ENCODE measurements at regions of chr9 and their contacts with region 1.

Region 1: GRCh38 chr9:2837915-2838314 is 6.0 kb downstream of the PUM3 start:
- DNase-seq: no peak
- ATAC-seq: peak in 3 of 4 donors; percentile 33 to 58 (median 55)
- H3K4me3 ChIP-seq: peak overlapping the region in 9 of 12 donors; percentile 7 to 52 (median 34)
- H3K27ac ChIP-seq: peak overlapping the region in 9 of 12 donors; percentile 0 to 73 (median 37)
- H3K4me1 ChIP-seq: peaks cover 3 to 56% (median 42%) of the 10 kb centered on the region in 12 donors
- H3K27me3 ChIP-seq: no peaks in the 10 kb centered on the region
- CTCF ChIP-seq: peak in 11 of 12 donors; percentile 22 to 64 (median 44)
- POLR2A ChIP-seq: no peak

Region 2: DNA sequence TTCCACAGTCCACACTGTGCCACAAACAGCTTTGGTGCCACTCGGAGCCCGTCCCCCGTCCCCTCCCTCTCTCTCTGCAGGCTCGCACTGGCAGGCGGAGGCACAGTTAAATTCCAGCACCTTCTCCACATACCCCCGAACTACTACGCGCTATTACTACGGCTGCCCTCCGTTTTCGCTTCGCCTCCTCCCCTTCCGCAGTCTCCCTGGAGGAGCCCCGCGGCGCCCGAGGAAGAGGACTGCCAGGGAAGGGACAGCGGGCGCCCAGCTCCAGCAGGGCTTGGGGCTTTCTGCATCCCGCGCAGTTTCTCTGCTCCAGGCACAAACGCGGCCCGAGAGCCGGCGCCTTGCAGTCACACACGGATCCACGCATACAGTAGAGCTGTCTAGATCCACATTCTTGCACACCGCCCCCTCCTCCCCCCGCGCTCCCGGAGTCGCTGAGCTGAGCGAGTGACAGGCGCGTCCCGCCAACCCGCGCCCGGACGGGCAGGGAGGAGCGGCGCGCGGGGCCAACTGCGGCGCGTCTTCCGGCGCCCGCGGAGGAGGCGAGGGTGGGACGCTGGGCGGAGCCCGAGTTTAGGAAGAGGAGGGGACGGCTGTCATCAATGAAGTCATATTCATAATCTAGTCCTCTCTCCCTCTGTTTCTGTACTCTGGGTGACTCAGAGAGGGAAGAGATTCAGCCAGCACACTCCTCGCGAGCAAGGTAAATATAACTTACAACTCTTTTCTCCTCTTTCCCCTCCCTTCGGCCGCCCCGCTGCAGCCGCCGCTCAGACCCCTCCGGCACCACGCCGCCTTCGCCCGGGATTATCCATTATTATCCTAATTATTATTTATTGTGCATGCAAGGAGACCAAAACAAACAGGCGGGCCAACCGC is 823.0 kb before region 1 on chr9 and contains the start of gene SMARCA2:
- intact Hi-C with region 1: loop called in 3 of 10 experiments (anchors 5 to 10 kb)
- DNase-seq: peak; percentile 98 to 99 (median 98)
- ATAC-seq: peak; percentile 87 to 93 (median 90)
- H3K4me3 ChIP-seq: peak within 1 kb of the TSS; percentile 54 to 97 (median 88)
- H3K27ac ChIP-seq: peak within 1 kb of the TSS; percentile 92 to 99 (median 97)
- H3K4me1 ChIP-seq: peaks cover 0 to 32% (median 23%) of the 10 kb centered on the region in 12 donors
- H3K27me3 ChIP-seq: no peaks in the 10 kb centered on the region
- CTCF ChIP-seq: no peak
- POLR2A ChIP-seq: peak; percentile 60 to 95
- total RNA-seq, gene SMARCA2: 88.0 to 149 (median 115) TPM

Region 3: GRCh38 chr9:2023532-2023931 is 814.4 kb before region 1 on chr9:
- intact Hi-C with region 1: loop called in 3 of 10 experiments (anchors 5 to 10 kb)
- DNase-seq: no peak
- ATAC-seq: no peak
- H3K4me3 ChIP-seq: no peak overlapping the region
- H3K27ac ChIP-seq: peak overlapping the region; percentile 21 to 74 (median 70)
- H3K4me1 ChIP-seq: peaks cover 11 to 100% (median 89%) of the 10 kb centered on the region in 12 donors
- H3K27me3 ChIP-seq: no peaks in the 10 kb centered on the region
- CTCF ChIP-seq: no peak
- POLR2A ChIP-seq: no peak

Region 4: DNA sequence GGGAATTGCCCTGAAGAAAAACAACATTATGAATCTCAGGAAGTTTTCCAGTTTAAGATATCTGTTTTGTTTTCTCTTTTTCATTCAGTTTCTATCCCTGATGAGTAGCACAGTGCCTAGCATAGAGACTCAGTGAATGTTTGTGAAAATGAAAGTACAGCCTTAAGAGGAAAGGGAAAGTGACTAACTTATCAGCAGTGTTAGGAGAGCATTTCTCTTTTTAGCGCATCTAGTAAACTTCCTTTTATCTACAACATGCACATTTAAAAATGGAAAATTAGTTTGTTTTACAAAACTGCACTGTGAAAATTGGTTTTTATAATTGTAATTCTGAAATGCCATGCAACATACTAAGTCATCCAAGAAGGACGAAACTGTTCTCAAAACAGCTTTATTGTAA is 712.0 kb before region 1 on chr9:
- intact Hi-C with region 1: loop called in 8 of 10 experiments (anchors 5 kb)
- DNase-seq: no peak
- ATAC-seq: peak in 2 of 4 donors; percentile 50 to 72
- H3K4me3 ChIP-seq: peak overlapping the region in 9 of 12 donors; percentile 8 to 36 (median 25)
- H3K27ac ChIP-seq: peak overlapping the region in 11 of 12 donors; percentile 48 to 85 (median 60)
- H3K4me1 ChIP-seq: peaks cover 2 to 75% (median 56%) of the 10 kb centered on the region in 12 donors
- H3K27me3 ChIP-seq: no peaks in the 10 kb centered on the region
- CTCF ChIP-seq: no peak
- POLR2A ChIP-seq: no peak

Region 5: GRCh38 chr9:2255128-2255527 is 582.8 kb before region 1 on chr9:
- intact Hi-C with region 1: loop called in 1 of 10 experiments (anchors 10 kb)
- DNase-seq: no peak
- ATAC-seq: no peak
- H3K4me3 ChIP-seq: no peak overlapping the region
- H3K27ac ChIP-seq: no peak overlapping the region
- H3K4me1 ChIP-seq: no peaks in the 10 kb centered on the region
- H3K27me3 ChIP-seq: no peaks in the 10 kb centered on the region
- CTCF ChIP-seq: peak in 2 of 12 donors; percentile 12 to 27
- POLR2A ChIP-seq: no peak

Region 6: GRCh38 chr9:3525836-3526164 is 687.9 kb after region 1 on chr9 and contains the start of gene RFX3:
- intact Hi-C with region 1: loop called in 1 of 10 experiments (anchors 5 kb)
- DNase-seq: peak; percentile 92 to 95 (median 94)
- ATAC-seq: peak; percentile 95 to 97 (median 96)
- H3K4me3 ChIP-seq: peak within 1 kb of the TSS; percentile 47 to 95 (median 83)
- H3K27ac ChIP-seq: peak within 1 kb of the TSS; percentile 97 to 100 (median 100)
- H3K4me1 ChIP-seq: peaks cover 0 to 45% (median 17%) of the 10 kb centered on the region in 12 donors
- H3K27me3 ChIP-seq: no peaks in the 10 kb centered on the region
- CTCF ChIP-seq: no peak
- POLR2A ChIP-seq: peak in 1 of 2 donors; percentile 29
- total RNA-seq, gene RFX3: 1.7 to 8.3 (median 2.9) TPM

Measured in heart left ventricle (tissue), 16 donors.